ENCODE measurements at regions of chr3 and their contacts with region 1.

Region 1: GRCh38 chr3:156474560-156475389 is 80.1 kb downstream of the SSR3 start:
- DNase-seq: peak in 3 of 14 experiments; percentile 8 to 24 (median 24)
- ATAC-seq: no peak
- H3K4me3 ChIP-seq: no peak overlapping the region
- H3K4me3 Mint-ChIP-seq: no peak overlapping the region
- H3K27ac ChIP-seq: no peak overlapping the region
- H3K27ac Mint-ChIP-seq: no peak overlapping the region
- H3K4me1 ChIP-seq: no peaks in the 10 kb centered on the region
- H3K4me1 Mint-ChIP-seq: no peaks in the 10 kb centered on the region
- H3K27me3 ChIP-seq: no peaks in the 10 kb centered on the region
- H3K27me3 Mint-ChIP-seq: peaks cover 27% of the 10 kb centered on the region
- CTCF ChIP-seq: no peak

Region 2: GRCh38 chr3:156536524-156537231 is 61.9 kb after region 1 on chr3:
- CTCF ChIA-PET with region 1: no interaction called
- POLR2A ChIA-PET with region 1: no interaction called
- intact Hi-C with region 1: loop called in 1 of 2 experiments (anchors 2 kb)
- DNase-seq: no peak
- ATAC-seq: no peak
- H3K4me3 ChIP-seq: no peak overlapping the region
- H3K4me3 Mint-ChIP-seq: no peak overlapping the region
- H3K27ac ChIP-seq: no peak overlapping the region
- H3K27ac Mint-ChIP-seq: no peak overlapping the region
- H3K4me1 ChIP-seq: no peaks in the 10 kb centered on the region
- H3K4me1 Mint-ChIP-seq: no peaks in the 10 kb centered on the region
- H3K27me3 ChIP-seq: no peaks in the 10 kb centered on the region
- H3K27me3 Mint-ChIP-seq: no peaks in the 10 kb centered on the region
- CTCF ChIP-seq: no peak

Measured in CD4-positive, alpha-beta T cell (primary cell).